ENCODE measurements at regions of chr17 and their contacts with region 1.

Region 1: DNA sequence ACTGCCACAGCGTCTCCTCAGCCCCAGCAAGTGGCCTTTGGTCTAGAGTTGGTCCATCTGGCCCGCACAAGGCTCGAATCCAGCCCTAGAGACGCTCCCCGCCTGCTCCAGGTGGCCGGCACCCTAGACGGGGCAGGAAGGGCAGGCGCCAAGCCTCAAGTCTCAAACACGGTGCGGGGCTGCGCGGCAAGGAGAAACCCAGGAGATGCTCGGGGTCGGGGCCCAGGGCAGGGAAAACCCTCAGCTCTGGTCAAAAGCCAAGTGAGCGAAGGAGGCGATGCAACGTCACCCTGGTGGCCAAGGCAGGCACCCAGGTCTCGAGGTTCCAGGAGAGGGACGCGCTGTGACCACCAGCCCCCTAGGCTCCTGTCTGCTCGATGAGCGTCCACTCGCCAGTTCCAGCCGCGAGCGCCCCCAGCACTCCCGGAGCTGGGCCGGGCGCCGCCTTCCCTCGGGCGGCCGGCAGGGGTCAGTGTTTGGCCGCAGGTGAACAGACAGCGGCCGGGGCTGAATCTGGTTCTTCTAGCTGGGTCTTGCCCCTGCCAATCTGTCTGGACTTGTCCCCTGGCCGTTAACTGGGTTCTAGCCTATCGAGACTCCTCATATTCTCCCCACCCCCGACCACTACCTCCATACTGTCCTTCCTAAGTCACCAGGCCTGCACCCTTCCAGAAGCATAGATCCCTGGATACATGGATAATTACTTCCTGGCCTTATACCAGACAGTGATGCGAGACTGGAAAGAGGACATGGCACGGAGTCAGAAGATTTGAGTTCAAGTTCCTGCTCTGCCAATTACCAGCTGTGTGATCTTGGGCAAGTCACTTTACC is 44.0 kb downstream of the PRAC1 start:
- DNase-seq: no peak
- H3K4me3 ChIP-seq: peak overlapping the region; percentile 30
- CTCF ChIP-seq: peak; percentile 93

Region 2: DNA sequence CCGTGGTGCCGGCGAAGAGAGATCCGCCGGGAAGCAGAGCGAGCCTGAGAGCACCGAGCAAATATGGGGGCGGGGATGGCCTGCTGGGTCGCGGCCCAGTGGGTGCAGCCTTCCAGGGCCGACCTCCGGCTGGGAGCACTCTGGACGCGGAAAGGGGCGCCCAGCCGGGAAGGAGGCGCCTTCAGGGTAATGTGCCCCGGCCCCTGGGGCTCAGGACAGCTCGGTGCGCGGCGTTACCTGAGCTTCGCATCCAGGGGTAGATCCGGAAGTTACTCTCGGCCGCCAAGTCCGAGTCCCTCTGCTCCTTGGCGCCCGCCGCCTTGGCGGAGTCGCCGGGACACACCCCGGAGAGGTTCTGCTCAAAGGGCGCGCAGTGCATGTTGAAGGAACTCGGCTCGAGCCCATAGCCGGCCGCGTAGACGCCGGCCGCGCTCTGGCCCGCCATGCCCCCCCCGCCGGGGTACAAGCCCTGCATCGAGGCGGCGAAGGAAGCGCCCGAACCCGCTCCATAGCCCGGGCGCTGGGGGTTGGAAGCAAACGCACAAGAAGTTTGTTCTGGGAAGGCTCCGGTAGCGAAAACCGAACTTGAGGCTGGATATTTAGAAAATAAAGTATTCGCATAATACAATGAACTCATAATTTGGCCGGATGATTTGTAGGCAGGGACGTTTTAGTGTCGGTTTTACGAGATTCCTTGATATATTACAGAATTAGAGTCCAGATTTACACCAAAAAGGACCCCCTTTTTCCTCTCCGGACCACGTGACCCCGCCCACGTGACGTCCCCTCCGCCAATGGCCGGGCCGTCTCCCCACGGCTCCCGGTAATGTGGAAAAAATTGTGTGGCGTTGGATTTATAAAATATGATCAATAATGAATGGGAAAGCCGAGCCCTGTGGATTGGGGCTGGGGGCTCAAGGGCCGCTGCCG is 67.8 kb before region 1 on chr17 and contains the start of gene HOXB7:
- CTCF ChIA-PET with region 1: no interaction called
- POLR2A ChIA-PET with region 1: no interaction called
- DNase-seq: no peak
- H3K4me3 ChIP-seq: peak within 1 kb of the TSS; percentile 67
- CTCF ChIP-seq: no peak

Region 3: DNA sequence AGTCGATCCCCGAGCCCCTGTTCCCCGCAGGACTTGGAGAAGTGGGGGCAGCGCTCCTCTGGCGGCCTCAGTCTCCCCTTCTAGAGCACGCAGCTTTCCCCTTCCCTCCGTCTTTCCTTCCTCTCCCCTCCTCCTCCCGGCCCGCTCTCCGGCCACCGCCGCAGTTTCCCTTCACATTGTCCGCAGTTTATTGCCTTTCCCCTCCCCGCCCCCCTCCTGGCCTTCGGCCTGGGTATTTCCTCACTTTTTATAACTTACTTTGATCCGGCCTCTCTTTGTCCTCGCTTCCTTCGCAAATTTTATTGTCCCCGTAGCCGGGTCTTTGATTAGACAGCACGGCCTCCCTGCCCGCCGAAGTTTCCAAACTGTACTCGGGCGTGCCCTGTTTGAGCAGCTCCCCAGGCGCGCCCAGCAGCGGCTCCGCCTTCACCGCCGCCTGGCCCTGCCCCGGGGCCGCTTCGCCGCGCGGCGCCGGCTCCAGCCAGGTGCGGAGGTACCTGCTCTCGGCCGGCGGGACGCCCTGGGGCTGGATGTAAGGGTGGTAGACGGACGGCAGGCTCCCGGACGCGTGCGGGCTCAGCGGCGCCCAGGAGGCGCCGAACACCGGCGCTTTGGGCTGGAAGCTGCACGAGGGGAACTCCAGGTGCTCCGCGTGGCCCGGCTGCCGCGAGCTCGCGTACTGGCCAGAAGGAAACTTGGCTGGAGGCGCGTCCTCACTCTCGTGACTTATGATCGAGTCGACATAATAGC is 52.7 kb before region 1 on chr17:
- CTCF ChIA-PET with region 1: no interaction called
- POLR2A ChIA-PET with region 1: no interaction called
- DNase-seq: no peak
- H3K4me3 ChIP-seq: peak overlapping the region; percentile 51
- CTCF ChIP-seq: no peak

Region 4: GRCh38 chr17:48636177-48637018 is 42.0 kb before region 1 on chr17:
- CTCF ChIA-PET with region 1: interaction called, 13 read pairs
- POLR2A ChIA-PET with region 1: no interaction called
- DNase-seq: no peak
- H3K4me3 ChIP-seq: no peak overlapping the region
- CTCF ChIP-seq: peak; percentile 81

Region 5: DNA sequence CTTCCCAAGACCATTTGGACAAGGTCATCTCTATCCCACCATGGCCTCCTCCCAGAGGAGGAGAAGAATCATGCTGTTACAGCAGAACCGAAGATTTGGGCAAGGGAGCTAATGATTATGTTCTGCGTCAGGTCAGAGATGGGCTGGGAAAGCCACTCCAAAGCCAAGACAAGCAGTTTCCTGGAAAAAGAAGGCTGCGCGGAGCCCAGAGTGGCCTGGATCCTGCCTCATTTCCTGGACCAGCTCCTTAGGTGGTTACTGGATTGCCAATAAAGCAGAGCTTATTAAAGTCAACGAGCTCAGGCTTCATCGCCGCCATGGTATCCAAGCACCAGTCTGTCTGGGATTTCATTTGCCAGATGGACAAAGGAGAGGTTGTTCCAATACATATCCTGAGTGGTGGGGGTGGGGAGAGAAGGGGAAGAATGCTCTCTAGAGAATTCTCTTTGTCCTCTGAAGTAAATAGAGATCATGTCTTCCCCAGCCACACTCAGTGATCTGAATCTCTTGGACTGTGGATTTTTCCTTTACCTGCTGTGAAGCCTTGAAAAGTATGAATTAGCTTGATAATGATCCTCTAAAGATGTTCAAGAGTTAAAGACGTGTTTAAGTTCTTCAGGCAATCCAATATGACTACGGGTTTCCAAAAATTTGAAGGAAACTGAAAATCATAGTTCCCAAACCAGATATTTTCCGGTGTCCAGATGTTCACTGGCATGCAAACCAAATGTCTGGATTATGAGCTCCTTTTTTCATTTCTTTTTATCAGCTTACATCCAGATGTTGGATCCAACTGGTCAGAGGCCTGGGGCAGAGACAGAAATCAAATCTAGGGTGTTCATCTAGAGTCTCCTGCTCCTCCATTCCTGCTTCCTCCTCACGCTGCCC is 26.2 kb after region 1 on chr17:
- CTCF ChIA-PET with region 1: interaction called, 18 read pairs
- POLR2A ChIA-PET with region 1: no interaction called
- DNase-seq: no peak
- H3K4me3 ChIP-seq: no peak overlapping the region
- CTCF ChIP-seq: no peak

Region 6: DNA sequence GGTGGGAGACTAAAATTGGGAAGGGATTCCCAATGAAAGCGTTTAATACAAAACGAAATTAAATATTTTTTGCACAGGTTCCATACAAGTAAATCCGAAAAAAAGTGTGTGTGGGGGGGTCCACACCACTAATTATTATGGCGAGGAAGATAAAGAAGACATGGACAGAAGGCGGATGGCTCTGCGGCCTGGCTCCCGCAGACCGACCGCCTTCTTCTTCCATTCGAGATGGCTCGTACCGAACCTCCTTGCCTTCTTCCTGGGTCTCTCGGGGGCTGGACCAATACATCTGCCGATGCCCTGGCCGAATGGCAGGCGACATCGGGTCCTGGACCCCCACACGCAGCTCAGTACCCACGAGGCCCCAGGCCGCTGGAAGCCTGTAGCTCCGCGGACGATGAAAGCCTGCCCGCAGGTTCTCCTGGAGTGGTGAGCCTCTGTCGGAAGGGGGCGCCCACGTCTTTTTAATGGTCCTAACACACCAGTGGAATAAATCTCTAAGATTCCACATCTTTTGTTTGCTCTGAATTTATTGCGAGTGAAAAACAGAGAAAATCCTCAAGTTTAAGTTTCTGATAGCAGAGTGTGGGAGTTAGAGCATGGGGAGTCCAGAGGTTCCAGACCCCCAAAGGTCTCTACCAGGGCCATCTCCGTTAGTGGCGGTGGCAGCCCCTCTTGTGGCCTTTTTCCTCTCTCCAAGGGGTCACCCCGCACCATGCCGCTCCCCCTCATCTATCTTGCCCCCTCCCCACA is 46.1 kb after region 1 on chr17:
- CTCF ChIA-PET with region 1: interaction called, 35 read pairs
- POLR2A ChIA-PET with region 1: no interaction called
- DNase-seq: no peak
- H3K4me3 ChIP-seq: no peak overlapping the region
- CTCF ChIP-seq: peak; percentile 83

Region 7: DNA sequence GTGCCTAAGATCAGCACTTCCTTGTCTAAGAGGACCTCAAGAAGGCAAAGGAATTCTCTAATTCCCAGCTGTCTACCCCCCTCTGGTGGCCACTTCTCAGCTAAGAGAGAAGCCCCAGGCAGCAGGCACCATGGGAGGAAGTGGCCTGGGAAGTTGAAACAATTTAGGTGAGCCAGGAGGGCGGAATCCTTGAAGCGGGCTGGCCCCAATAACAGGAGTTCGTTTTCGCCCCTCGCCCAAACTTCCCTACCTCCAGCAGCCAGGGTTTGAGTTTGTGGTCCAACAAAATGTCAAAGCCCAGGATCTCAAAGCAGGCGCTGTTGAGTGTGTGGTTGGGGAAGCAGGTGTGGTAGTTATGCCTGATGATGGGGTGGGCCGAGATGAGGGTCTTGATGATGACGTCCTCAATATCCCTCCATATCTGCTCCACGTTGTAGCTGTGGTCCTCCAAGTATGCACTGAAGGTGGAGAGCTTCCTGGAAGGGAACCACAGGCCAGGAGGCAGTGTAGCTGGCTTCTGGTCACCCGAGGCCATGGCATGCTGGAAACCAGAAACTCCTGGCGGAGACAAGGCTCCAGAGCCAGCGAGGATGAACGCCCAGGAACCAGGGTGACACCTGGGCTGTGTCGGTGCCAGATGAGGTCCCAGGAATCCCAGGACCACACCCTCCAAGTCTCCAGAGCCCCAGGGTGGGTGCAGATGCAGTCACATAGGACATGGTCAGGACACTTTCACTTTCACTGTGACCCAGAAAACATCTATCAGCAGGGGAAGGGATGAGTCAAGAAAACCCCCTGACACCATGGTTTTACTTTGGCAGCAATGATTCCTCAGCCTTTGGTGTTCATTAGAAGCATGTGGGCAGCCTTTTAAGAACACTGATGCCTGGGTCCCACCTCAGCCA is 113.0 kb after region 1 on chr17:
- CTCF ChIA-PET with region 1: interaction called, 164 read pairs
- POLR2A ChIA-PET with region 1: no interaction called
- DNase-seq: peak; percentile 45
- H3K4me3 ChIP-seq: no peak overlapping the region
- CTCF ChIP-seq: peak; percentile 82

Region 8: GRCh38 chr17:48816774-48817590 is 138.6 kb after region 1 on chr17 and contains the start of gene TTLL6:
- CTCF ChIA-PET with region 1: interaction called, 21 read pairs
- POLR2A ChIA-PET with region 1: no interaction called
- DNase-seq: no peak
- H3K4me3 ChIP-seq: peak within 1 kb of the TSS; percentile 45
- CTCF ChIP-seq: no peak

Measured in AG04449 (cell line).